ENCODE measurements at regions of chr9 and their contacts with region 1.

Region 1: GRCh38 chr9:84397151-84397728 is 56.7 kb upstream of the SLC28A3 start:
- DNase-seq: peak; percentile 61
- H3K4me3 ChIP-seq: no peak overlapping the region
- H3K27ac ChIP-seq: no peak overlapping the region
- H3K4me1 ChIP-seq: no peaks in the 10 kb centered on the region
- H3K27me3 ChIP-seq: no peaks in the 10 kb centered on the region
- CTCF ChIP-seq: peak; percentile 81 to 89 (median 84)
- POLR2A ChIP-seq: no peak

Region 2: GRCh38 chr9:84953797-84954705 is 556.8 kb after region 1 on chr9:
- intact Hi-C with region 1: loop called (anchors 10 kb)
- DNase-seq: peak; percentile 53
- H3K4me3 ChIP-seq: no peak overlapping the region
- H3K27ac ChIP-seq: no peak overlapping the region
- H3K4me1 ChIP-seq: no peaks in the 10 kb centered on the region
- H3K27me3 ChIP-seq: no peaks in the 10 kb centered on the region
- CTCF ChIP-seq: peak; percentile 61 to 83 (median 79)
- POLR2A ChIP-seq: no peak

Region 3: DNA sequence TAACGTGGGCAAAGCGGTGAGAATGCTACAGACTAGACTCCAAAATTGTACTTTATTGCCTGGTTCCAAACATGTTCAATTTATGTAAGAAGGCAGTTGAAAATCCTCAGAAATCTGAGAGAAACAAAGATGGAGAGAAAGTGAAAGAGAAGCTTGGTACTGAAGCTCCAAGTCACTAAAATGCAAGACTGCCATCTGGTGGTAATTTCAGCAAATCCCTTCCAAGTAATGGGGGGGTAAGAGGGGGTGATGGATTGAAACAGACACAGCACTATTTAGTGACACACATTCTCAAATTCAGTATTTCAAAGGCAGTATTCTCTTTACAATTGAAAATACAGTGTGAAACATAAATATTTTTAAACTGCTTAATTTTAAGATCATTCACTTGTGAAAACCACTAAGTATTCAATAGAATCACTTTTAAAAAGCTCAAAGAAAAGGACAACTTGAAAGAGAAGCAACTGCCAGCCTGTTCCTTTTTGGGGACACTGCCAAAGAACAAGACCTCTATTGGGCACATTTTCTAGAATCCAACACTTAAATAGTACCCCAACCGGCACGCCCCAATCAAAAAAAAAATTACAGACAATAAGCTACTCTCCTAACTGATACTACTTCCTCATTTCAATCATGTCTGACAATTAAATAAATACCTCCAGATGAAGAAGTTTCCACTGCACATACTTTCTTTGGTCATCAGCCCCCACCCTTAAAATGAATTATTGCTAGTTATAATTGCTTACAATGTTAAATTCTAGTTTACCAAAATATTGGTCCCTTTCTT is 1213.0 kb after region 1 on chr9:
- intact Hi-C with region 1: loop called (anchors 2 kb)
- DNase-seq: peak; percentile 30
- H3K4me3 ChIP-seq: no peak overlapping the region
- H3K27ac ChIP-seq: no peak overlapping the region
- H3K4me1 ChIP-seq: no peaks in the 10 kb centered on the region
- H3K27me3 ChIP-seq: no peaks in the 10 kb centered on the region
- CTCF ChIP-seq: peak; percentile 54 to 78 (median 74)
- POLR2A ChIP-seq: no peak

Measured in prostate gland (tissue), 2 donors.